Activated B cell treated with CpG ODN at 0.5 μM for 24 hours (primary cell): ENCODE measurements at regions of chr11 and their contacts with region 1.

Region 1: GRCh38 chr11:16820324-16821092 is 82.1 kb downstream of the C11orf58 start:
- DNase-seq: peak; percentile 23
- ATAC-seq: peak; percentile 91
- H3K4me3 Mint-ChIP-seq: no peak overlapping the region
- H3K27ac Mint-ChIP-seq: peak overlapping the region; percentile 7
- H3K4me1 Mint-ChIP-seq: peaks cover 6% of the 10 kb centered on the region
- H3K27me3 Mint-ChIP-seq: no peaks in the 10 kb centered on the region
- CTCF ChIP-seq: peak; percentile 41

Region 2: GRCh38 chr11:16785520-16786128 is 34.9 kb before region 1 on chr11:
- CTCF ChIA-PET with region 1: interaction called, 10 read pairs
- POLR2A ChIA-PET with region 1: no interaction called
- intact Hi-C with region 1: loop called (anchors 1 kb)
- DNase-seq: no peak
- ATAC-seq: peak; percentile 85
- H3K4me3 Mint-ChIP-seq: no peak overlapping the region
- H3K27ac Mint-ChIP-seq: no peak overlapping the region
- H3K4me1 Mint-ChIP-seq: no peaks in the 10 kb centered on the region
- H3K27me3 Mint-ChIP-seq: no peaks in the 10 kb centered on the region
- CTCF ChIP-seq: peak; percentile 16

Region 3: DNA sequence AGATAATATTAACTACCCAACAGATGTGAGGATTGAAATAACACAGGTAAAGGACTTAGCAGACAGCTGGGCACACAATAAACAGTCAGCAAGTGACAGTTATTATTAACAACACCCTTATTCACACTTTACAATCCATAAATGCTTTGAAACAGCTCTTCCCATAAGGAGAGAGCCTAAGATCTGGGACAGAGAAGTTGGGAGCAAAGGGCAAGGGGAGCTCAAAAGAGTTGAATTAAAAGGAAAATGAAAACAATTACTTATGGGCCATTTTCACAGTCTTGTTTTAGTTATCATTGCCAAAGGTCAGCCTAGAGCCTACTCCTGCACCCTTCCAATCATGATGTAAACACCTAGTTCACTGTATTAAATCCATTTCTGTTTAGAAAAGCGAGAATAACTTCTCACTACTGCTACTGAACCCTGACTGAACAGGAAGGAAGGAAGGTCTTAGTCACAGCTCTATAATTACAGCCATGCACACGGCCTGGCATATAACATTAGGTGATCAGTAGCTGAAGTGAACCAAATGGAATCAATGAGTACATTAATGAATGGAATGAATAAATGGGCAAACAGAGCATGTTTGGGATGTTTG is 82.4 kb after region 1 on chr11:
- CTCF ChIA-PET with region 1: interaction called, 5 read pairs
- POLR2A ChIA-PET with region 1: no interaction called
- intact Hi-C with region 1: loop called (anchors 2 kb)
- DNase-seq: no peak
- ATAC-seq: peak; percentile 64
- H3K4me3 Mint-ChIP-seq: peak overlapping the region; percentile 74
- H3K27ac Mint-ChIP-seq: peak overlapping the region; percentile 92
- H3K4me1 Mint-ChIP-seq: peaks cover 33% of the 10 kb centered on the region
- H3K27me3 Mint-ChIP-seq: no peaks in the 10 kb centered on the region
- CTCF ChIP-seq: no peak

Region 4: GRCh38 chr11:16935518-16936302 is 115.2 kb after region 1 on chr11:
- CTCF ChIA-PET with region 1: no interaction called
- POLR2A ChIA-PET with region 1: no interaction called
- intact Hi-C with region 1: loop called (anchors 1 kb)
- DNase-seq: no peak
- ATAC-seq: no peak
- H3K4me3 Mint-ChIP-seq: no peak overlapping the region
- H3K27ac Mint-ChIP-seq: no peak overlapping the region
- H3K4me1 Mint-ChIP-seq: peaks cover 1% of the 10 kb centered on the region
- H3K27me3 Mint-ChIP-seq: no peaks in the 10 kb centered on the region
- CTCF ChIP-seq: no peak

Region 5: GRCh38 chr11:17063171-17064002 is 242.9 kb after region 1 on chr11:
- CTCF ChIA-PET with region 1: interaction called, 59 read pairs
- POLR2A ChIA-PET with region 1: no interaction called
- intact Hi-C with region 1: loop called (anchors 1 kb)
- DNase-seq: peak; percentile 39
- ATAC-seq: peak; percentile 71
- H3K4me3 Mint-ChIP-seq: no peak overlapping the region
- H3K27ac Mint-ChIP-seq: no peak overlapping the region
- H3K4me1 Mint-ChIP-seq: peaks cover 3% of the 10 kb centered on the region
- H3K27me3 Mint-ChIP-seq: no peaks in the 10 kb centered on the region
- CTCF ChIP-seq: no peak

Region 6: DNA sequence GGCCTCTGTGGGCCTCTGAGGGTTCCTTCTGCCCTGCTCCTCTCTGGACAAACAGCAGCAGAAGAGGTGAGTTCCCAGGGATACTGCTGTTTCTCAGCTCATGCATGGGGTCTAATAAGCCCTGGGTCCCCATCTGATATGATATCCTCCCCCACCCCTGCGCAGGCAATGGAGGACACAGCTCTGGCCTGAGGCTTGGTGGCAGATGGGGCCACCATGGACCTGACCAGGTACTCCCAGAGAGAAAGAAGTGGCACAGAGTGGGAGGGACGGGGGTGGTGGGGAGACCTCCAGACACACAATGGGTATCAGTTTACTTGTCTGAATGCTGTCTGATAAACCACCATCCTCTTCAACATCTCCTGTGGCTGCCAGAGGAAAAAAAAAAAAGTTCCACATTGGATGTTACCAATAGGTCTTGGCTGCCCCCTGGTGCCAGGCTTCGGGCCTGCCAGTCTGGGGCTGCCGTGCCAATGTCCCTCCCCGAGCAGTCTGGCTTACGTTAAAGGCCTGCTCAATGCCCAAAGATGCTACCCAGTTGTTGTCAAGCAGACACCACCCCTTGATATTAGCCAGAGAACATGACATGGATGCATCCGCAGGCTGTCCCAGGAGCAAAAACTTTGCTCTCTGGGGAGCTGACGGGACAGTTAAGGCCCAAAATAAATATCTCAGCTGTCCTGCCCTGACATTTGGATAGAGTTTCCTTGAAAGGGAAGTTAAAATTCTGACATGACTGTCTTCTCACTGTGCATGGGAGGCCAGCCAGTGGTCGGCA is 684.0 kb after region 1 on chr11:
- CTCF ChIA-PET with region 1: interaction called, 4 read pairs
- POLR2A ChIA-PET with region 1: no interaction called
- intact Hi-C with region 1: loop called (anchors 1 kb)
- DNase-seq: peak; percentile 57
- ATAC-seq: peak; percentile 66
- H3K4me3 Mint-ChIP-seq: no peak overlapping the region
- H3K27ac Mint-ChIP-seq: no peak overlapping the region
- H3K4me1 Mint-ChIP-seq: no peaks in the 10 kb centered on the region
- H3K27me3 Mint-ChIP-seq: peaks cover 5% of the 10 kb centered on the region
- CTCF ChIP-seq: no peak